ENCODE measurements at regions of chr12 and their contacts with region 1.

Region 1: GRCh38 chr12:9750276-9751203 is 10.2 kb downstream of the CD69 start:
- DNase-seq: peak; percentile 45 to 63
- H3K4me3 ChIP-seq: peak overlapping the region; percentile 46; the same call in 1 of the 2 replicates
- H3K27ac ChIP-seq: no peak overlapping the region
- H3K4me1 ChIP-seq: peaks cover 9% of the 10 kb centered on the region; the same call in 1 of the 2 replicates
- H3K27me3 ChIP-seq: no peaks in the 10 kb centered on the region
- CTCF ChIP-seq: peak; percentile 93

Region 2: DNA sequence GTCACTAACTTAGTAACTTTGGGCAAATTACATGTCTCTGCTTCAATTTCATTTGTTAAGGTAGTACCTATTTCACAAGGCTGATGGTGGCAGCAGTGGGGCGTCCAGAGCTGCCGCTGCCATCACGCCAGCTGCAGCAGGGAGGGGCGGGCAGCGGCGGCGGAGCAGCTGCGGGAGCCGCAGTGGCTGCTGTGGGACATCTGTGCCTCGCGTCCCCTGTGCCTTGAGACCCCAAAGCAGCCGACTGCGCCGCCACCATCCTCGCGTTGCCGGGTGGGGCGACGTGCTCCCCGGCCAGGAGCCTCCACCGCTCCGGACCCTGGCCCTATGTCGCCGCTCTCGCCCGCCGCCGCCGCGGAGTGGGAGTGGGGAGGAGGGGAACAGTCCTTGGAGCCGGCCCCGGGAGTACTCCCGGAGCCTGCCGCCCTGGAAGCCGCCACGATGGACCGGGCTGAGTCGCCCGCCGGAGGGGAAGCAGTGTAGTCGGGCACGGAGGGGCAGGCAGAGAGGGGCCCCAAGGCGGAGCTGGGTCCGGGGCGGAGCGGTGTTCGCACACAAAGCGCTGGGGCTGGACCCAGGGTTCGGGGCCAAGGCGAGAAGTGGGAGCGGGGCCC is 686.2 kb before region 1 on chr12:
- CTCF ChIA-PET with region 1: no interaction called
- POLR2A ChIA-PET with region 1: interaction called, 13 read pairs
- intact Hi-C with region 1: no loop called
- DNase-seq: peak; percentile 55 to 75
- H3K4me3 ChIP-seq: peak overlapping the region; percentile 82
- H3K27ac ChIP-seq: peak overlapping the region; percentile 56
- H3K4me1 ChIP-seq: peaks cover 6% of the 10 kb centered on the region
- H3K27me3 ChIP-seq: no peaks in the 10 kb centered on the region; the same call in 1 of the 2 replicates
- CTCF ChIP-seq: peak; percentile 49; the same call in 1 of the 2 replicates

Region 3: DNA sequence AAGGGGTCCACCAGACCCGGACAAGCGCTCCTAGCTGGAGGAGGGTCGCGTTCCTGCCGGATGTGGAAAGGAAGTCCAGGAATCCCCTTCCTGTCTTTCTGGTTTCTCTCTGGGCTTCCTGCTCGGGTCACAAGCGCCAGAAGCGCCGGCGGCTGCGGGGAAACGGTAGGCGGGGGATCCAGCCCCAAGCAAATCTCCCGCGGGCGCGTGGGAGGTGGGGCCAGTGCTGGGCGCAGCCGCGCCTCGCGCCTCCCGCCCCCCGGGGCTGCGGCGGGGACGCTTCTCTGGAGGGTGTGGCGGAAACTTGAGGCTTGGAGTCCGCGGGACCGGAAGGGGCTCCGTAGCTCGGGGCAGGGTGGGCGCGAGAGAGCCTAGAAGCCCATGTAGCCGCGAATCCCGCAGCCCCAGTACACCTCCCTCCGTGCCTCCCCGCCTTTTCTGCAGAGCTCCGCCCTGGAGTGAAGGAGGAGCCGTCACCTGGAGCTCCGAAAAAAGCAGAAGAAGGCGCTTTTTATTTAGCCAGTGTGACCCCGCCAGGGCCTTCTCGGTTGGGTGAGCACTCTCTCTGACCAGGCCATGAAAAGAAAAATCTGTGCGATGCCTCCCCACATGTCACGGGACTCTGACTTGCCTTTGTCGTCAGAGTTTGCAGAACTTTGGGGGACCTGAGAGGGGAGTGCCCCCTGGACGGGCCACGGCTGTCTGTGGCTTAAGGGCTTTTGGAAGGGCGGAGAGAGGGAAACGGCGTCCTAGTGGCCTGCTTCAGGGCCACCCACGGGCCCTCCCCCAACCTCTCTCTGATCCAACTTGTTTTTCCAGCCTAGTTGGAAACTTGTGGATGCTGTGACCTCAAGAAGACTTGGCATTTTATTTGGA is 102.5 kb before region 1 on chr12:
- CTCF ChIA-PET with region 1: no interaction called
- POLR2A ChIA-PET with region 1: no interaction called
- intact Hi-C with region 1: loop called (anchors 1 kb)
- DNase-seq: peak; percentile 85 to 97
- H3K4me3 ChIP-seq: peak overlapping the region; percentile 81
- H3K27ac ChIP-seq: peak overlapping the region; percentile 88
- H3K4me1 ChIP-seq: peaks cover 40% of the 10 kb centered on the region
- H3K27me3 ChIP-seq: no peaks in the 10 kb centered on the region
- CTCF ChIP-seq: 0 out of 2 replicates have a peak, but pooled peaks have one; percentile 10

Region 4: GRCh38 chr12:9925708-9926393 is 175.3 kb after region 1 on chr12:
- CTCF ChIA-PET with region 1: no interaction called
- POLR2A ChIA-PET with region 1: no interaction called
- intact Hi-C with region 1: loop called (anchors 1 kb)
- DNase-seq: peak in 1 of 2 experiments; percentile 6
- H3K4me3 ChIP-seq: 0 out of 2 replicates have a peak overlapping the region, but pooled peaks have one; percentile 9
- H3K27ac ChIP-seq: no peak overlapping the region
- H3K4me1 ChIP-seq: no peaks in the 10 kb centered on the region
- H3K27me3 ChIP-seq: no peaks in the 10 kb centered on the region
- CTCF ChIP-seq: peak; percentile 70

Region 5: DNA sequence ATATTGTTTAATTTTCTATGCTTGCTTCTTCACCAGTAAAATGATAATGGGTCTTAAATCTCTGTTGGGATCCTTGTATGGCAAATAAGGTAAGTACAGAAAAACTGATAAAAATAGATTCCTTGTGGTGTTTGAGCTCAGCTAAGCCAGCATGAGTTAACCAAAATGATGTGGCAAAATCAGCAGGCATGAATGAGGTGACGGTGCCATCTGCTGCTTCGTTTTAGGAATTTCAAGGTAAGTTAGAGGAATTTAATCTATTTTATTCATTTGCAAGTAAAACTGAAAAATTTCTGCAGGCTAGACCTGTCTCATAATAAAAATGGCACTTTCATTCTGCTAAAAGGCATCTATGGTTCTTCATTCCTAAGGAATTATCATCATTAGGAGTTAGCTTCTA is 389.5 kb after region 1 on chr12:
- CTCF ChIA-PET with region 1: interaction called, 12 read pairs
- POLR2A ChIA-PET with region 1: no interaction called
- intact Hi-C with region 1: loop called (anchors 1 kb)
- DNase-seq: peak; percentile 41 to 56
- H3K4me3 ChIP-seq: no peak overlapping the region
- H3K27ac ChIP-seq: no peak overlapping the region
- H3K4me1 ChIP-seq: no peaks in the 10 kb centered on the region
- H3K27me3 ChIP-seq: no peaks in the 10 kb centered on the region
- CTCF ChIP-seq: peak; percentile 82

Region 6: DNA sequence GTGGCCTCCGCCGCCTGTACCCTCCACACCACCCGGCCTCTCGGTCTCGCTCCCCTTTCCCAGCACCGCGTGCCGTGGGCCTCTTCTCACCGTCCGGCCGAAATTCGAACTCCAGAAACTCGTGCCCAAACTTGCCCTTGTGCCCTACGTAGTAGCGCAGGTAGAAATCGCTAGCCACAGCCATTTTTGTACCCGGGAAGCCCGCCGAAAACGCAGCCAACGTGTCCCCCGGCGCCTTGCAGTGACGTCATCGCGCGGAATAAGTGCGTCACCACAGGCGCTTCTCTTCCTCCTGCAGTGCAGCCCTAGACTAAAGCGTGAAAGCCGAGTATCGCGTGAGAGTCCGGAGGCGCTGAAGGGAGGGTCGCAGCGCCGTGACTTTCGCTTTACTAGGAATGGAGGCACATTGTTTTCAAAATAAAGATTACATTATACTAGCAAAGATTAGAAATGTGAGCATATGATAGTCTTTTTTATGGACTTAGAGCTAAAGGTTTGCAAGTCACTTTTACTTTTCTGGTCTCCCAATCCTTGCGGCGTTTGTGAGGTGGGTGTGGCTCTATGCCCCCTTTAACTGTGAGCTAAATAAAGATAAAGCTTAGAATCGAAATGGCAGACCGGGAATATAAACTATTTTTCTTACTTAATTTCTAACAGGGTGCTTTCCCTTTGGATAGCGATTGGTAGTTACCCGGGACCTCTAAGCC is 863.0 kb after region 1 on chr12 and contains the start of gene MAGOHB:
- CTCF ChIA-PET with region 1: no interaction called
- POLR2A ChIA-PET with region 1: no interaction called
- intact Hi-C with region 1: no loop called
- DNase-seq: peak; percentile 86 to 97
- H3K4me3 ChIP-seq: peak within 1 kb of the TSS; percentile 90
- H3K27ac ChIP-seq: peak within 1 kb of the TSS; percentile 85
- H3K4me1 ChIP-seq: peaks cover 29% of the 10 kb centered on the region
- H3K27me3 ChIP-seq: no peaks in the 10 kb centered on the region
- CTCF ChIP-seq: no peak
- total RNA-seq, gene MAGOHB: 53.8 and 91.4 TPM in 2 replicates

Region 7: DNA sequence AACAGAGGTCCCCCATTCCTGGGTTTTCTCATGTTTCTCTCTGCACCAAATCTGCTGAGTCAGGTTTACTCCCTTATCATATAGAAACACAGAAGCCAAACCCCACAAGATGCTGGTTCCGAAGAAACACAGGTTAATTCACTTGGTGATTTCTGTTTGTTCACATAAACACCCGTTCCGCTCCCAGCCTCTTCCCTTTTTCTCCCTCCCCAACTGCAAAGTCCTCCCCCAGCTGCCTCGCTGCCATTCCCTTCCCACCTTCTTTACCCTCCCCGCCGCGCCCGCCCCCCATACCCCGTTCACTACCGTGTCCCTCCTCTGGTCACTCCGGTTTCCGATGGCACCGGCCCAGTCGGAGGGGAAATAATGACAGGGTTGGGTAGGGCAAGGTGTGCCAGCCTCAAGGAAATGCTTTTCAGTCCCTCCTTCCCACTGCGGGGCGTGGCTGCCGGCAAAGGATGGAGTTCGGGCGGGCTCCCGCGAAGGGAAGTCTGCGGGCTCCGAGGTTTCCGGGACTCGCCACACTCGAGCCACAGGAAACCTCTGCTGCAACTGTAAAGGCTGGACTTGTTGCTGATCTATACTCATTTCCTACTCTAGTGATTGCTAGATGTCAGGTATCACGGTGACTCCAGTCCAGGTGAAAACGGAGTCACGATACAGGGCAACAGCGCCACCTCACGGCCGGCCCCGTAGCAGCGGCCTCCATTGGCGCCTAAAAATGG is 923.3 kb after region 1 on chr12 and contains the start of gene STYK1:
- CTCF ChIA-PET with region 1: no interaction called
- POLR2A ChIA-PET with region 1: no interaction called
- intact Hi-C with region 1: loop called (anchors 5 kb)
- DNase-seq: peak; percentile 89 to 95
- H3K4me3 ChIP-seq: peak within 1 kb of the TSS; percentile 76
- H3K27ac ChIP-seq: peak within 1 kb of the TSS; percentile 77
- H3K4me1 ChIP-seq: peaks cover 11% of the 10 kb centered on the region; the same call in 1 of the 2 replicates
- H3K27me3 ChIP-seq: no peaks in the 10 kb centered on the region
- CTCF ChIP-seq: peak; percentile 99
- total RNA-seq, gene STYK1: 7.8 and 16.9 TPM in 2 replicates

Measured in PC-9 (cell line).